GM10248 (cell line): ENCODE measurements at regions of chr7 and their contacts with region 1.

Region 1: GRCh38 chr7:105531792-105532671 is at the start of gene RINT1:
- DNase-seq: peak; percentile 91
- CTCF ChIP-seq: peak; percentile 89

Region 2: DNA sequence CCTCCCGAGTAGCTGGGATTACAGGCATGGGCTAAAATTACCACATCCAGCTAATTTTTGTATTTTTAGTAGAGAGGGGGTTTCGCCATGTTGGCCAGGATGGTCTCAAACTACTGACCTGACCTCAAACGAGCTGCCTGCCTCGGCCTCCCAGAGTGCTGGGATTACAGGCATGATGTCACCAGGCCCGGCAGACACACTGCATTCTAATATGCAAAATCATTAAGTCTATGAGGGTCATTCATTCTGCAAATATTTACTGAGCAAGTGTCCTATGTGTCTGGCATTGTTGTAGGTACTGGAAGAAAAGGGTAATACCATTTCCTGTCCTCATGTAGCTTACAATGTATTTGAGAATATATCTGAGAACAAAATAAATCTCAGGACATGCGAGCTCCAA is 12.7 kb before region 1 on chr7:
- CTCF ChIA-PET with region 1: interaction called, 16 read pairs
- POLR2A ChIA-PET with region 1: interaction called, 3 read pairs
- DNase-seq: no peak
- CTCF ChIP-seq: no peak

Region 3: DNA sequence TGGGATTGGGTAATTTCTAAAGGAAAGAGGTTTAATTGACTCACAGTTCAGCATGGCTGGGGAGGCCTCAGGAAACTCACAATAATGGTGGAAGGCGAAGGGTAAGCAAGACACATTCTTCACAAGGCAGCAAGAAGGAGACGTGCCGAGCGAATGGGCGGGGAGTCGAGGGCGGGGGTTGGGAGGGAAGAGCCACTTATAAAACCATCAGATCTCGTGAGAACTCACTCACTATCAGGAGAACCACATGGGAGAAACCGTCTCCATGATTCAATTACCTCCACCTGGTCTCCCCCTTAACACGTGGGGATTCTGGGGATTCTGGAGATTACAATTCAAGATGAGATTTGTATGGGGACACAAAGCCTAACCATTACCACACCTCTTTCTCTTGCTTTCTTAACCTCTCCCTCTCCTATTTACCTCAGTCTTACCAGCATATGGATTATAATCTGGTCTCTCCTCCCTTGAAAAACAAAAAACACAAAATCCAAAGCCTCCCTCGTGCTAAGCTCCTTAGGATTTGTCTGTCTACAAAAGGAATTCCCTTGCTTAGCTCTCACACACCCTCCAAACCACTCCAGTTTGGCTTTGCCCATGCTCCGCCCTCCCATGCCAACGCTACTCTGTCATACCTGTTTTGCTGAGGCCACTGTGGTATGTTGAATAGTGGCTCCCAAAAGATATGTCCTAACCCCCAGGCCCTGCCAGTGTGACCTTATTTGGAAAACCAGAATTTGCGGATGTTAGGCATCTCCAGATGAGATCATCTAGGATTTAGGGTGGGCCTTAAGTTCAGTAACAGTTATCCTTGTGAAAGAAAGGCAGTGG is 68.9 kb after region 1 on chr7:
- CTCF ChIA-PET with region 1: no interaction called
- POLR2A ChIA-PET with region 1: no interaction called
- DNase-seq: no peak
- CTCF ChIP-seq: no peak

Region 4: GRCh38 chr7:105621617-105622016 is 89.6 kb after region 1 on chr7:
- CTCF ChIA-PET with region 1: no interaction called
- POLR2A ChIA-PET with region 1: no interaction called
- DNase-seq: no peak
- CTCF ChIP-seq: no peak

Region 5: DNA sequence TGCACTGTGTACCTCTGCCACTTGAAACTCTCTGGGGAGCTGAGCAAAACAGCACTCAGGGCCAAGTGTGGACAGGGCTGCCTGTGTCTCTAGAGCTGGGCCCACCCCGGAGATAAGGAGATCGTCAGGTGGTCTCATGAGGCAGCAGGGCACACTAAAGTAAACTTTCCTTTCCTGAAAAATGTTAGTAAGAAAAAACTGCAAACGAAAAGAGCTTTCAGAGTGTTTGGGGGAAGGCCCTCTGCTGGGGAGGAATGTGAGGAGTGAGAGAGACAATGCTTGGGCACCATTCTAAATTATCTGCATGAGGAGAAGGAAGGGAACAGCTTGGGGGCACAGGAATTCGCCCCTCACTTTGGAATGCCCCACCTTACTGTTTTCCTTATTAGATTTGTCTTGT is 216.7 kb after region 1 on chr7:
- CTCF ChIA-PET with region 1: no interaction called
- POLR2A ChIA-PET with region 1: no interaction called
- DNase-seq: no peak
- CTCF ChIP-seq: no peak